Activated T-helper 1 cell treated with anti-CD3 and anti-CD28 coated beads, Interleukin-12 subunit alpha, Interleukin-12 subunit beta, Interleukin-2, Interleukin-4 antibody, amounts not matched to agents 30 ng/mL and 10 ng/mL and 1 ng/mL, durations not matched to agents 14 hours and 24 hours and 36 hours (primary cell): ENCODE measurements at regions of chr19 and their contacts with region 1.

Region 1: DNA sequence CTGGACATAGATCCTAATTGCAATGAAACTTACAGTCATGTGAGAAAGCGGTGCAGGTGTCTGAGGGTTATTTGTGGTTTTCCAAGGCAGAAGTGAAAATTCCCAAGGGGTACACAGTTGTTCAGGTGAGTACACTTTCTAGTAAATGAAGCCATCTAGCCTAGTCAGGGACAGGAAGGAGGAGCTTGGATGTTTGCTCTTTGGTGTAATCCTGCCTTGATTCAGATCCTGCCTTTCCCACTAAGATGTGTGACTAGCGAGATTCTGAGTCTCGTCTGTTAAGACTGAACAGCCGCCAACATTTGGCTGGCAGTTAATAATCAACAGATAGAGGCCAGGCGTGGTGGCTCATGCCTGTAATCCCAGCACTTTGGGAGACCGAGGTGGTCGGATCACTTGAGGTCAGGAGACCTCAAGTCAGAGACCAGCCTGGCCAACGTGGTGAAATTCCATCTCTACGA is 2.5 kb downstream of the RPS9 start:
- DNase-seq: no peak
- H3K4me3 Mint-ChIP-seq: peak overlapping the region; percentile 95
- H3K27ac Mint-ChIP-seq: peak overlapping the region; percentile 99
- H3K4me1 Mint-ChIP-seq: peaks cover 75% of the 10 kb centered on the region
- H3K27me3 Mint-ChIP-seq: no peaks in the 10 kb centered on the region

Region 2: DNA sequence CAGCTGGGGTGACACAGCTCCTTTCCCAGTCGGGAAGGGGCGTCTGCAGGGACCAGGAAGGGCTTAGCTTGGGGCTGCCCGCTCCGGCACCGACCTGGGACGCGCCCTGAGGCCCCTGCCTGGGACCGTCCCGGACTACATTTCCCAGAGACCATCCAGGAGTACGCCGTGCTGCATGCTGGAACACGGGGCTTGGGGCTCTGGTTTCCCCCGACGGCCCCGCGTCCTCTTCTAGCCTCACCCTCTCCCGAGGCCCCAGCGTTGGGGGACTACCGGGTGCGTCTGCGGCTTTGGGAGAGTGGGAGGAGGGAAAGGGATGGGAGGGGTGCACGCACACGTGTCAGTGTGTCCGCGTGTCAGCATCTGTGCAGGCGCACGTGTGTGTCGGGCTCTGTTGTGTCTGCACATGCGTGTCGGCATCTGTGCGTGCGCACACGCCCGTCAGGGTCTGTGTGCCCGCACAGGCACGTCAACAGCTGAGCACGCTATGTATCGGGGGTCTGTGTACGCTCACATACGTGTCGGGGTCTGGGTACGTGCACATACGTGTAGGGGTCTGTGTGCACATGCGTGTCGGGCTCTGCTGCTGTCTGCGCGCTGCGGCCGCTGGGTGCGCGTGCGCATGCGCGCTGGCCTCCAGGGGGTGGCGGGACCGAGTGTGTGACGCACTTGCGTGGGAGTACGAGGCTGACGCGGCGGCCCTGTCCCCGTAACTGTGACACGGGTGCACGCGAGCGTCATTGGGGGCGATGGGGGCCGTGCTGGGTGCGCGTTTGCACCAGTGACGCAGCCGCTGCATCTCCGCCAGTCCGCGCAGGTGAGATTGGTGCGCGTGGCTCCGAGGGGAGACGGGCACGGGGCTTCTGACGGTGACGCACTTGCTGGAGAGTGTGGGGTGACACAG is 665.4 kb before region 1 on chr19 and contains the start of gene ZNF331:
- intact Hi-C with region 1: loop called (anchors 5 kb)
- DNase-seq: peak; percentile 84
- H3K4me3 Mint-ChIP-seq: peak within 1 kb of the TSS; percentile 96
- H3K27ac Mint-ChIP-seq: peak within 1 kb of the TSS; percentile 97
- H3K4me1 Mint-ChIP-seq: no peaks in the 10 kb centered on the region
- H3K27me3 Mint-ChIP-seq: no peaks in the 10 kb centered on the region
- total RNA-seq, gene ZNF331: 17.9 and 19.6 TPM in 2 replicates

Region 3: DNA sequence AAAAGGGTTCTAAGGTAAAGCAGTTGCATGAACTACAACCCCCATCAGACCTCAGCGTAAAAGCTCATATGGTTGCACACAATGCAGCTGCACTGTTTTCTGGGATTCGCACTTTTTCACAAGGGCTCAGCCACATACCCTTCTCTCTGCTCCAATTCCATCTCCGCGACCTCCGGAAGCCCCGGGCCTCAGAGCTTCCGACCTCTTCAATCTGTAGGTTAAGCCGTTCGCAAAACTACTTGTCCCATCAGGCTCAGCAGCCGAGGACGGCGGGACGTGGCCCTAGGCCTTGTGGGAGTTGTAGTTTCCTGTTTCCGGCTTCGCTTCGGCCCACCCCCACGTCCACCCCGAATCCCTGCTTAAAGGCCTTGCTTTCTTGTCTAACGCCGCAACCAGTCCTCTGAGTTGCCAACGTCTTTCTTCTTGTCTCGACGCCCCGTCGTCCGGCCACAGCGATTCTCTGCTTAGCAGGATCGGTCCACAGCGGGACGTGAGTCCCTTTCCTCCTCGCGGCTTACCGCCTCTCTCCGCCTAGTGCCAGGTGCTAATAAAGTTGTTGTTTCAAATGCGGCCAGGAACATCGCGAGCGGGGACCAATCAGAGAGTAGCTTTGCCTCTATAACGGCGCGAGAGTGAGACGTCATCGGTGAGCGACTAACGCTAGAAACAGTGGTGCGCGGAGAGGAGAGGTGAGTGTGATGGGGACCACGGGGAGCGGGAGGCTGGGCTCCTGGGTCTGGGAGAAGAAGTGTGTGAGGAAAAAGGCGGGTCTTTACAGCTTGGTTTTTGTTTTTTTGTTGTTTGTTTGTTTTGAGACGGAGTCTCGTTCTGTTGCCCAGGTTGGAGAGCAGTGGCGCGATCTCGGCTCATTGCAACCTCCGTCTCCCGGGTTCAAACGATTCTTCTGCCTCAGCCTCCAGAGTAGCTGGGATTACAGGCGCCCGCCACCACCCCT is 87.8 kb before region 1 on chr19 and contains the starts of genes PRPF31 and TFPT:
- intact Hi-C with region 1: loop called (anchors 1 kb)
- DNase-seq: peak; percentile 93
- H3K4me3 Mint-ChIP-seq: peak within 1 kb of the TSS; percentile 94
- H3K27ac Mint-ChIP-seq: peak within 1 kb of the TSS; percentile 91
- H3K4me1 Mint-ChIP-seq: peaks cover 32% of the 10 kb centered on the region
- H3K27me3 Mint-ChIP-seq: no peaks in the 10 kb centered on the region
- total RNA-seq, gene PRPF31: 110 and 118 TPM in 2 replicates
- total RNA-seq, gene TFPT: 31.1 and 33.4 TPM in 2 replicates

Region 4: GRCh38 chr19:54231077-54231931 is 28.1 kb after region 1 on chr19:
- intact Hi-C with region 1: loop called (anchors 1 kb)
- DNase-seq: peak; percentile 77
- H3K4me3 Mint-ChIP-seq: no peak overlapping the region
- H3K27ac Mint-ChIP-seq: no peak overlapping the region
- H3K4me1 Mint-ChIP-seq: peaks cover 6% of the 10 kb centered on the region
- H3K27me3 Mint-ChIP-seq: peaks cover 43% of the 10 kb centered on the region

Region 5: GRCh38 chr19:54448774-54449700 is 245.9 kb after region 1 on chr19 and contains the start of gene LENG8:
- intact Hi-C with region 1: loop called (anchors 2 kb)
- DNase-seq: peak; percentile 96
- H3K4me3 Mint-ChIP-seq: peak within 1 kb of the TSS; percentile 99
- H3K27ac Mint-ChIP-seq: peak within 1 kb of the TSS; percentile 98
- H3K4me1 Mint-ChIP-seq: peaks cover 36% of the 10 kb centered on the region
- H3K27me3 Mint-ChIP-seq: no peaks in the 10 kb centered on the region
- total RNA-seq, gene LENG8: 192 and 193 TPM in 2 replicates